ENCODE measurements at regions of chr2 and their contacts with region 1.

Region 1: DNA sequence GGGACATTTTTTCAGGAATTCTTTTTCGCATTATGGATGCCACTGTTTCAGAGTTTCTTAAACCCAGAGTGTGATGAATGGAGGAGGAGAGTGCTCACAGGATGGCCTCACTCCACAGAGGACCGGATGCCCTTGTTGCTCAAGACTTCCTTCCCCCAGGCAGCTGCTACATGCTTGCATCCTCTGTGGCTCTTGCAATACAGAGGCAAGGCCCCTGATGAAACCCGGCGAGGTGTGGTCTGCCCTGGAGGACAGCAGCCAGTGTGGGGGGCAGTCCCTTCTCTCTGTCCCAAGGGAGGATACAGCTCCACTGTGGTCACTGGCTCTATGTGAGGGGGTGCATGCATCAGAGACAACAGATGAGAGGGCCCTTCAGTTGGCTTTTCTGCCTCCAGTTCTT is 109.6 kb downstream of the SH3RF3 start:
- DNase-seq: peak; percentile 97
- H3K4me3 Mint-ChIP-seq: peak overlapping the region; percentile 16
- H3K27ac Mint-ChIP-seq: peak overlapping the region; percentile 70
- H3K4me1 Mint-ChIP-seq: peaks cover 57% of the 10 kb centered on the region
- H3K27me3 Mint-ChIP-seq: no peaks in the 10 kb centered on the region
- CTCF ChIP-seq: no peak

Region 2: DNA sequence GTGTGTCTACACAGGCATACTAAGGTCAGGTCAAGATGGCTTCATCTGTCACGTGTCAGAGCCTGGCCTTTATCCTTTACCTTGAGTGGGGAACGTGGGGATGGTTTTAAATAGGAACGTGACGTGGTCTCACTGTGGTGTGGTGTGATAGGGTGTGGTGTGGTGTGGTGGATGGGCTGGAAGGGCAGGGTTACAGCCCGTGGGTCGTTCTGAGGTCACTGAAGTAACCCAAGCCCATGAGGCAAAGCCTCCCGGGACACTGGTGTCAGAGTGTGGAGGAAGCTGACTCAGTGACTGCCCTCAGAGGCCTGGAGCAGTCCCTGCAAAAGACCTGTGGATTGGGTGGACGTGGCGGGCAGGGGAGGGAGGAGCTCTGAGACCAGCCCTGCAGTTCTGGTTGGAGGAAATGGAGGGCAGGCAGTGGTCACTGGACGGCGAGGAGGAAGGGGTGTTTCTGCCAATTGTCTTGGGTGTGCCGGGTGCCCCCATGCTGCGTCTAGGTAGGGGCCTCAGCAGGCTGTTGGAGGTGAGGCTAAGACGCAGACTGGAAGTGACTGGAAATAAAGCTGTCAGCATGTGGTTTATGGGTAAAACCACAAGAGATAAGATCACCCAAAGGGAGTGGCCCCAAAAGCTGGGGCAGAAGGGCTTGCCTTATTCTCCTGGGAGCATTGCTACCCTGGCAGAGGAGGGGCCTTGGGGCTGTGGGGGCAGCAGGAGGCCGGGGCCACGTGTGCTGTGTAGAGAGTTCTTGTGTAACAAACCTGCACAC is 24.7 kb before region 1 on chr2:
- CTCF ChIA-PET with region 1: interaction called, 4 read pairs
- POLR2A ChIA-PET with region 1: interaction called, 7 read pairs
- intact Hi-C with region 1: loop called (anchors 1 kb)
- DNase-seq: peak; percentile 97
- H3K4me3 Mint-ChIP-seq: peak overlapping the region; percentile 48
- H3K27ac Mint-ChIP-seq: peak overlapping the region; percentile 90
- H3K4me1 Mint-ChIP-seq: peaks cover 78% of the 10 kb centered on the region
- H3K27me3 Mint-ChIP-seq: no peaks in the 10 kb centered on the region
- CTCF ChIP-seq: no peak

Region 3: DNA sequence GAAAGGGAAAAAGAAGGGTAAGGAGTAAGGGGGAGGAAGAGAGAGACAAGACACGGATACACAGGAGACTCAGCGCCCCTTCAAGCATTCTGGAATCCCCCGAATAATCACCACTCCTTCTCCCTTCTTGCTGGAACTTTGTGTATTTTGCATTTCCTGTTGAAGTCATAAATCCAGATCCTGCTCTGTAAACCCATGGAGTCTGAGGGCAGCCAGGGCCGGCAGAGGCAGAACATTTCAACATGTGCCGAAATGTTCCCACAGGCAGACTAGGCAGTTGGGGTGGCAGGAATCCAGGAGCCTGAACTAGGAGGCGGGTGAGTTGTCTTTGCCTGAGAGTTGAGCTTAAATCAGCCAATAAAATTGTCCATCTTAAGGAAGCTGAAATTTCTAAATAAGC is 83.5 kb after region 1 on chr2:
- CTCF ChIA-PET with region 1: interaction called, 3 read pairs
- POLR2A ChIA-PET with region 1: interaction called, 11 read pairs
- intact Hi-C with region 1: loop called (anchors 5 kb)
- DNase-seq: peak; percentile 97
- H3K4me3 Mint-ChIP-seq: peak overlapping the region; percentile 63
- H3K27ac Mint-ChIP-seq: peak overlapping the region; percentile 71
- H3K4me1 Mint-ChIP-seq: peaks cover 51% of the 10 kb centered on the region
- H3K27me3 Mint-ChIP-seq: no peaks in the 10 kb centered on the region
- CTCF ChIP-seq: no peak

Measured in MCF 10A (cell line).